ENCODE measurements at regions of chr19 and their contacts with region 1.

Region 1: DNA sequence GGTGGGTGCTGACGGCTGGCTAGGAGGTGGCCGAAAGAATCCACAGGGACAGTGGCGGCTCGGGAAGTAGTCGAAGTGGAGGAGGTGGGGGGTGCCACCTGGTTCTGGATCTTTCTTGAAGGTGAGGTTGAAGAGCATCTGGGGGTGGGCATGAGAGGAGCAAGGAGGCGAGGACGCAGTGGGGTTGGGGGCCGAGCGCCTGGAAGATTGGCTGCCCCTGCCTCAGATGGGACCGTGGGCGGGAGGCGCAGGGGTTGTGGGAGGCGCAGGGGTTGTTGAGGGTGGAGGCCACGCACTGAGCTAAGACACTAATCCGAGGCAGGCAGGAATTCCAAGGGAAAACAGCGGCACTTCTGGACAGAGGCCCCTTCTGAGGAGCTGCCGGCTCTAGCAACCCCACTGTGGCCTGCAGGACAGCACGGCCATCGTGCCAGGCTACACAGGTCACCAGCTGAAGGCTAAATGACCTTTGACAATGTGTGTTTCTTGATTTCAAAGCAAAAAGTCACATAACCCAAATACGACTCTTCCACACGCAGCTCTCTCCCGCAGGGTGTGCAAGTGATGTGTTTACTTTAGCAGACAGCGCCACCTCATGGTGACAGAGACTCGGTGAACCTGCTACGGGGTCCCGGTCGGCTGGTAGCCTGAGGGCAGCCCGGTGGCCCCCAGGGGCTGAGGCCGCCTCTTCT is 44.1 kb upstream of the RANBP3 start:
- DNase-seq: peak; percentile 62
- H3K4me3 Mint-ChIP-seq: no peak overlapping the region
- H3K27ac Mint-ChIP-seq: no peak overlapping the region
- H3K4me1 Mint-ChIP-seq: peaks cover 3% of the 10 kb centered on the region
- H3K27me3 Mint-ChIP-seq: no peaks in the 10 kb centered on the region

Region 2: DNA sequence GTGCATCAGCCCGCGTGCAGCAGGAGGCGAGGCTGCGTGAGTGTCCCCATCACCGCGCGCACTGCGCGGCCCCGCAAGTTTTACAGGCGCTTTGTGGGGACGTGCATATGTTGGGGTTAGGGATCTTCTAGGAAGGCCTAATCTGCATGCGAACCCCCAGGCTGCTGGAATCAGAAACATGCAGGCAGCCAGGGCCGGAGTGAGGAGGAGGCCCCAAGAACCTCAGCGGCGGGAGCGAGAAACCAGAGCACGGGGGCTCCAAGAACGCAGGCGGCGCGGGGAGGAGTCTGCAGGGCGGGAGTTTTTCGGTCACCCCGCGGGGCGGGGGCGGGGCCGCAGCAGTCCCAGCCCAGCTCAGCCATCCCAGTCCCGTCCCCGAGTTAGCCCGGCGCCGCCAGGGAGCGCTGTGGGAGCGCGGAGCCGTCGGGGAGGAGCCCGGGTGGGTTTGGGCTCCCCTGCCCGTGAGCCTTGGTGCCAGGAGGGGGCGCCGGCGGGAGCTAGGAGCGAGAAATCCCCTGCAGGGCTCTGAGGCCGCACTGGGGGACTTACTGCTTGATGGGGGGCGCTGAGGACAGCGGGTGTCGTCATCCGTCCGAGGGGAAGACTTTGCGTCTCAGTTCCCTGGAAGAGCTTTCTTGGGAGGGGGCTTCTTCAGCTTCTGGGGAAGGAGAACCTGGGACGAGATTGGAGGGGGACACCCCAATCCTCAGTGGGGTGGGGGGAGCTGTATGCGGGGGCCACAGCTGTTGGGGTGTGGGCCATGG is 218.1 kb before region 1 on chr19:
- intact Hi-C with region 1: loop called (anchors 2 kb)
- DNase-seq: peak; percentile 93
- H3K4me3 Mint-ChIP-seq: peak overlapping the region; percentile 73
- H3K27ac Mint-ChIP-seq: peak overlapping the region; percentile 62
- H3K4me1 Mint-ChIP-seq: peaks cover 16% of the 10 kb centered on the region
- H3K27me3 Mint-ChIP-seq: peaks cover 21% of the 10 kb centered on the region

Region 3: DNA sequence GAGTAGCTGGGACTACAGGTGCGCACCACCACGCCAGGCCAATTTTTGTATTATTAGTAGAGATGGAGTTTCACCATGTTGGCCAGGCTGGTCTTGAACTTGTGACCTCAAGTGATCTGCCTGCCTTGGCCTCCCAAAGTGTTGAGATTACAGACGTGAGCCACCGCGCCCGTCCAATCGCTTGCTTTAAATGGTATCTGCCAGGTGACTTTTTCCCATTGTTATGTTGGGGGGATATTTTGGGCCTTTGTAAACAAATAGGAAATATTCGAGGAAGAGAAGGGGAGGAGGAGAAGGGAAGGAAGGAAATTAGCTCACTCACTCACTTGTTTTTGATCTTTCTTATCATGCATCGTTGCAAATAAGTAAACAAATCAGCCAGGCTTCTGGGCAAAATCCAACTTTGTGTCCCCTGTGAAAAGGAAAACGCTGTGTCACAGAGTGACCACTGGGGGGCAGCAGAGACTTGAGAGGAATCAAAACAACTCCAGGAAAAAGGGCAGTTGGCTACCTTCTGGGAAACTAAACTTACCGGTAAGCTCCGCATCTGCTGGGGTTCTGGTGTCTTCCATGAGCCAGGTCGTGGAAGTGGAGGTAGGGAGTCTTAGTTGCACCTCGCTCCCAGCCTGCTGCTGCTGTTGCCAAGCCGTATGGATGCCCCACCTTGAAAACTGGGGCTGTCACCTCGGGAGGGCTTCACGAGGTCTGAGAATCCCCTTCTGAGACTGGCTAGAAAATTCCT is 34.8 kb before region 1 on chr19:
- intact Hi-C with region 1: loop called (anchors 1 kb)
- DNase-seq: peak; percentile 59
- H3K4me3 Mint-ChIP-seq: peak overlapping the region; percentile 57
- H3K27ac Mint-ChIP-seq: no peak overlapping the region
- H3K4me1 Mint-ChIP-seq: peaks cover 39% of the 10 kb centered on the region
- H3K27me3 Mint-ChIP-seq: no peaks in the 10 kb centered on the region

Region 4: GRCh38 chr19:6047741-6048251 is 25.8 kb after region 1 on chr19:
- intact Hi-C with region 1: no loop called
- DNase-seq: no peak
- H3K4me3 Mint-ChIP-seq: no peak overlapping the region
- H3K27ac Mint-ChIP-seq: no peak overlapping the region
- H3K4me1 Mint-ChIP-seq: peaks cover 8% of the 10 kb centered on the region
- H3K27me3 Mint-ChIP-seq: peaks cover 4% of the 10 kb centered on the region

Region 5: DNA sequence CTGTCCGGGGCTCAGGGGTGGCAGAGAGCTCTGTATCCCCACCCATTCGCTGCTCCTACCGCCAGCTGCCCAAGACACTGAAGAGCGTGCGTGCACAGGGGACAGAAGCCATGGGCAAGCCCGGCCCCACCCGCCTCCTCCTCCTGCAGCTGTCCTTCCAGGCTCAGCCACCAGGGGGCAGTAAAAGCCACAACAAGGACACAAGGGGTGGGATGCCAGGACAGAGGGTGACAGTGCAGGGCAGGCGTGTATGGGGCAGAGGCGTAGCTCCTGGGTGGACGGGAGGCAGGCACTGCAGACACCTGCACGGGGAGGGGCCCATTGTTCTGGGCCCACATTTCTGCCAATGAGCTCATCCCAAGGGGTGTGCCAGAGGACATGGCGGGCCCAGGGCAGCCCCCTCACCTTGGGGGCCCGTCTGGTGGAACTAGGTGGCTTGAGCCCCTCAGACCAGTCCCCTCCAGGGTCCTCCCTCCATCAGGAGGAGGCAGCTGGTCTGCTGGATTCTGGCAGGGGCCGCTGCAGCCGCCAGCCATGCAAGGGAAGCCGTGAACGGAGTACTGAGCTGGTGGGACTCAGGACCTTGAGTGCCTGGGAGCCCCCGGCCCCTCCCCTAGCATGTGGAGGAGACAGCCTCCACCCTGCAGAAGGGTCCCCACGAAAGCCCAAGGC is 196.6 kb after region 1 on chr19:
- intact Hi-C with region 1: no loop called
- DNase-seq: peak; percentile 74
- H3K4me3 Mint-ChIP-seq: no peak overlapping the region
- H3K27ac Mint-ChIP-seq: peak overlapping the region; percentile 38
- H3K4me1 Mint-ChIP-seq: peaks cover 2% of the 10 kb centered on the region
- H3K27me3 Mint-ChIP-seq: no peaks in the 10 kb centered on the region